ENCODE measurements at regions of chr20 and their contacts with region 1.

Region 1: DNA sequence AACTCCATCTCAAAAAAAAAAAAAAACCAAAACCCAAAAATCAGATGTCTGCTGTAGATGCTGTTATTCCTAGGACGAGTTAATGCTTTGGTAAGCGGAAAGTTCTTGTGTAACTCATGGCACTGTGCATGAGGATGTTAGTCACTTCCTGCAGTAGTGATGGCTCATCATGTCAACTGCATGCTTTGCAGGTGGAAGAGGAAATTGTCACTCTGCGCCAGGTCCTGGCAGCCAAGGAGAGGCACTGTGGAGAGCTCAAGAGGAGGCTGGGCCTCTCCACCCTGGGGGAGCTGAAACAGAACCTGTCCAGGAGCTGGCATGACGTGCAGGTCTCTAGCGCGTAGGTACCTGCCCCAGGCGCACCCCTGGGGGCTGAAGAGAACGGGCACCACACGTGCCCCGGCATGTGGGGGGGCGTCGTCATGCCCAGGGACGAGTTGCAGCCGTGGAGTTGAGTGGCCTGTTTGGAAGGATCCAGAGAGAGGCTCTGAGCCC is 8.5 kb downstream of the TPD52L2 start:
- DNase-seq: peak; percentile 95
- H3K4me3 Mint-ChIP-seq: peak overlapping the region; percentile 19
- H3K27ac Mint-ChIP-seq: peak overlapping the region; percentile 73
- H3K4me1 Mint-ChIP-seq: peaks cover 6% of the 10 kb centered on the region
- H3K27me3 Mint-ChIP-seq: no peaks in the 10 kb centered on the region
- CTCF ChIP-seq: no peak

Region 2: DNA sequence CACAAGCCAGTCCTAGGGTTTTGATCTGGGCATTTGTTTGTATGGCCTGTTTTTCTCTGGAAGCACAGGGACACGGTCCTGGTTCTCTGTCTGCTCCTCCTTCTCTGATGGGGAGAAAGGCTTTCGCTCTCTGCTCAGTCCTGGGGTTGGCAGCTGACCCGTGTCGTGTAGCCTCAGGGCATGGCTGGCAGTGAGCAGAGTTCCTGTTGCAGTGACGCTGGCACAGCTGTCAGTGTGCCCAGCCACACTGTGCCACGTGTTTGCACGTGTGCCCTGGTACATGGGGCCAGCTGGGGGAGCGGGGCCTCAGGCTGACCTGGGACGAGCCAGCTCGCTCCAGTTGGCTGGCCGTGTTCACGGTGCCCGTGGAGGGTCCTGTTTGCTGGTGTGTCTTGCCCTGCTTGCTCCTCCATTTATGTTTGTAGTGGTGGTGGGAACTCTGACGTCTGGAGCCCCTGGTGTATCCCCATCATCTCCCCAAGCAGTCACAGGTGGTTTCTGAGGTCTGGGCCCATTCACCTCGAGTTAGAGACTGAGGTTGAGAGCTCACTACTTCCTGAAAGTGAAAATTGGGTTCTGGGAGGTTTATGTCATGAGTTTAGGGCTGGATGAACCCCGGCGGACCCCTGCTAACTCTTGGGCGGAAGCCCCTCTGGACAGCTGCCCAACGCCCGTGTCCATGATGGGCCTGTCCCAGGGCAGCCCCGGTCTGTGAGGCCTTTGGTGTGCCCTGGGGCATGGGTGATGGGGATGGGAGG is 11.2 kb after region 1 on chr20:
- CTCF ChIA-PET with region 1: no interaction called
- POLR2A ChIA-PET with region 1: interaction called, 13 read pairs
- intact Hi-C with region 1: no loop called
- DNase-seq: peak; percentile 57
- H3K4me3 Mint-ChIP-seq: peak overlapping the region; percentile 36
- H3K27ac Mint-ChIP-seq: peak overlapping the region; percentile 25
- H3K4me1 Mint-ChIP-seq: peaks cover 25% of the 10 kb centered on the region
- H3K27me3 Mint-ChIP-seq: no peaks in the 10 kb centered on the region
- CTCF ChIP-seq: no peak

Region 3: GRCh38 chr20:64024141-64024990 is 150.8 kb after region 1 on chr20:
- CTCF ChIA-PET with region 1: no interaction called
- POLR2A ChIA-PET with region 1: no interaction called
- intact Hi-C with region 1: no loop called
- DNase-seq: no peak
- H3K4me3 Mint-ChIP-seq: no peak overlapping the region
- H3K27ac Mint-ChIP-seq: no peak overlapping the region
- H3K4me1 Mint-ChIP-seq: no peaks in the 10 kb centered on the region
- H3K27me3 Mint-ChIP-seq: no peaks in the 10 kb centered on the region
- CTCF ChIP-seq: no peak